Ovary (tissue), 10 donors: ENCODE measurements at regions of chr2 and their contacts with region 1.

Region 1: DNA sequence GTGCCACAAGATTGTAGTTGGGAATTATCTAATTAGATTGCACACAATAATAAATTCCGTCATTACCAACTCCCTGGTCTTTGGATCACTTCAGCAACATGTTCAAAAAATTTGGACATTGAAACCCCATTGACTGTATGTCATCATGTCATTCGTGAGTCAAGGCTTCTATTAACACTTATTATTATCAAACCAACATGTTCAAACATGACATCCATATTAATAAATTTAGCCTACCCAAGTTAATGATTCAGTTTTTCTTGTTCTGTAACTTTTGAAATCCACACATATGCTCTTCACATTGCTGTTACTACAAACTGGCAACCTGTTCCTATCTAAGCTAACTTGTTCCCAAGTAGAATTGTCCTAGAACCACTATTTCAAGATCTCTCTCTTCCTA is 1142.7 kb upstream of the SLC39A10 start:
- DNase-seq: no peak
- H3K4me3 ChIP-seq: no peak overlapping the region
- H3K27ac ChIP-seq: no peak overlapping the region
- H3K4me1 ChIP-seq: no peaks in the 10 kb centered on the region
- H3K27me3 ChIP-seq: no peaks in the 10 kb centered on the region
- CTCF ChIP-seq: no peak
- EP300 ChIP-seq: no peak
- POLR2A ChIP-seq: no peak

Region 2: GRCh38 chr2:194526121-194526520 is 11.8 kb after region 1 on chr2:
- intact Hi-C with region 1: loop called in 1 of 4 experiments (anchors 2 kb)
- DNase-seq: no peak
- H3K4me3 ChIP-seq: no peak overlapping the region
- H3K27ac ChIP-seq: no peak overlapping the region
- H3K4me1 ChIP-seq: no peaks in the 10 kb centered on the region
- H3K27me3 ChIP-seq: no peaks in the 10 kb centered on the region
- CTCF ChIP-seq: no peak
- EP300 ChIP-seq: no peak
- POLR2A ChIP-seq: no peak

Region 3: GRCh38 chr2:194539425-194539824 is 25.1 kb after region 1 on chr2:
- intact Hi-C with region 1: loop called in 1 of 4 experiments (anchors 1 kb)
- DNase-seq: no peak
- H3K4me3 ChIP-seq: no peak overlapping the region
- H3K27ac ChIP-seq: no peak overlapping the region
- H3K4me1 ChIP-seq: no peaks in the 10 kb centered on the region
- H3K27me3 ChIP-seq: no peaks in the 10 kb centered on the region
- CTCF ChIP-seq: no peak
- EP300 ChIP-seq: no peak
- POLR2A ChIP-seq: no peak